ENCODE measurements at regions of chr1 and their contacts with region 1.

Region 1: GRCh38 chr1:111507411-111508201 is 4.2 kb upstream of the ADORA3 start:
- DNase-seq: peak; percentile 79
- ATAC-seq: peak; percentile 88
- H3K4me3 Mint-ChIP-seq: peak overlapping the region; percentile 63
- H3K27ac Mint-ChIP-seq: peak overlapping the region; percentile 50; the same call in 1 of the 2 replicates
- H3K4me1 Mint-ChIP-seq: peaks cover 7% of the 10 kb centered on the region
- H3K27me3 Mint-ChIP-seq: no peaks in the 10 kb centered on the region
- CTCF ChIP-seq: no peak

Region 2: GRCh38 chr1:111481387-111482221 is 26.0 kb before region 1 on chr1:
- CTCF ChIA-PET with region 1: interaction called, 71 read pairs
- POLR2A ChIA-PET with region 1: interaction called, 5 read pairs
- DNase-seq: peak; percentile 74
- ATAC-seq: peak; percentile 98
- H3K4me3 Mint-ChIP-seq: no peak overlapping the region
- H3K27ac Mint-ChIP-seq: no peak overlapping the region
- H3K4me1 Mint-ChIP-seq: no peaks in the 10 kb centered on the region
- H3K27me3 Mint-ChIP-seq: no peaks in the 10 kb centered on the region
- CTCF ChIP-seq: peak; percentile 42

Region 3: DNA sequence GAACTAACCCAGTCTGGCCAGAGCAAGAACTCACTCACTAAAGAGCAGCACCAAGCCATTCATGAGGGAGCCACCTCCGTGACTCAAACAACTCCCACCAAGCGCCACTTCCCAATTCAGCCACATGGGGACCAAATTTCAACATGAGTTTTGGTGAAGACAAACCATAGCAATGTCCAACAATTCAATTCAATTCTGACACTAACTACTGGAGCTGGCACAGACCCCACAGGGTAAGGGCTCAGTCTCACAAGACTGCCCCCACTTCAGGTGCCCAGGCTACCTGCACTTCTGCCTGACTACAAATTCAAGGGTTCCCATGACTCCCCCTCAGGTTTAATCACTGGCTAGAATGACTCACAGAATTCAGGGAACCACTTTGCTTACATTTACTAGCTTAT is 63.2 kb after region 1 on chr1:
- CTCF ChIA-PET with region 1: interaction called, 11 read pairs
- POLR2A ChIA-PET with region 1: no interaction called
- DNase-seq: peak; percentile 34
- ATAC-seq: peak; percentile 83
- H3K4me3 Mint-ChIP-seq: no peak overlapping the region
- H3K27ac Mint-ChIP-seq: no peak overlapping the region
- H3K4me1 Mint-ChIP-seq: peaks cover 15% of the 10 kb centered on the region
- H3K27me3 Mint-ChIP-seq: no peaks in the 10 kb centered on the region
- CTCF ChIP-seq: 0 out of 2 replicates have a peak, but pooled peaks have one; percentile 24

Region 4: DNA sequence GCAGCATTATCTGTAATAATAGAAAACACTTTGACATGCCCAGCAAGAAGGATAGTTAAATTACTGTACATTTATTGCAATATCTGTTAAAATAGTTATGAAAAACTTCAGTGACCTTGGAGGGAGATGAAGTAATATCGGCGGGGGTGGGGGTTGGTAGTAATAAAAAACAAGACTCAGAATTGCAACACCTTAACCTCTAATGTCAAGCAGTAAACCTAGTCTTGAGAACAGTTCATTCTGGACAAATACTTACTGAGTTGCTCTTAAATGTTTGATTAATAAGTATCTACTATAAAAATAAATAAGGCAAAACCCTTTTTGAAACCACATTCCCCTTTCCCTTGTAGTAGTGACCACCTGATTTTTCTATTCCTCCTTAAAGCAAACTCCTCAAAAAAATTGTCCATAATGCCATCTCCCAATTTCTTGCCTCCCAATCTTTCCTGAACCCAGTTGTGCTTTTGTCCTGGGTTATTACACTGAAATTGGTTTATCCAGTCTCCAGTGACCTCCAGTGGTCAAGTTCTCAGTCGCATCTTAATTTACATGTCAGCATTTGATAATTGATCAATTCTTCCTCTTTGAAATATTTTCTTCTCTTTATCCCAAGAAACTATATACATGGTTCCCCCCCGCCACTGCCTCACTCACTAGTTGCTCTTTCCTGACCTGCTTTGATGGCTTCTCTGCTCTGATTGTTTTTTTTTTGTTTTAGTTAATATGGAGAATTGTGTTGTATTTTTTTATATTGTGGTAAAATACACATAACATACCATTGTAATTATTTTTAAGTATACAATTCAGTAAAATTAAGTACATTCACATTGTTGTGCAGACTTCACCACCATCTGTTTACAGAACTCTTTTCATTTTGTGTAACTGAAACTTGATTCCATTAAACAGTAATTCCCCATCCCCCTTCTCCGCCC is 148.7 kb after region 1 on chr1:
- CTCF ChIA-PET with region 1: interaction called, 11 read pairs
- POLR2A ChIA-PET with region 1: no interaction called
- DNase-seq: no peak
- ATAC-seq: no peak
- H3K4me3 Mint-ChIP-seq: no peak overlapping the region
- H3K27ac Mint-ChIP-seq: peak overlapping the region; percentile 62; the same call in 1 of the 2 replicates
- H3K4me1 Mint-ChIP-seq: peaks cover 18% of the 10 kb centered on the region
- H3K27me3 Mint-ChIP-seq: no peaks in the 10 kb centered on the region
- CTCF ChIP-seq: no peak

Region 5: GRCh38 chr1:111709986-111710385 is 202.4 kb after region 1 on chr1:
- CTCF ChIA-PET with region 1: interaction called, 43 read pairs
- POLR2A ChIA-PET with region 1: no interaction called
- DNase-seq: no peak
- ATAC-seq: no peak
- H3K4me3 Mint-ChIP-seq: no peak overlapping the region
- H3K27ac Mint-ChIP-seq: no peak overlapping the region
- H3K4me1 Mint-ChIP-seq: no peaks in the 10 kb centered on the region
- H3K27me3 Mint-ChIP-seq: no peaks in the 10 kb centered on the region
- CTCF ChIP-seq: no peak

Region 6: DNA sequence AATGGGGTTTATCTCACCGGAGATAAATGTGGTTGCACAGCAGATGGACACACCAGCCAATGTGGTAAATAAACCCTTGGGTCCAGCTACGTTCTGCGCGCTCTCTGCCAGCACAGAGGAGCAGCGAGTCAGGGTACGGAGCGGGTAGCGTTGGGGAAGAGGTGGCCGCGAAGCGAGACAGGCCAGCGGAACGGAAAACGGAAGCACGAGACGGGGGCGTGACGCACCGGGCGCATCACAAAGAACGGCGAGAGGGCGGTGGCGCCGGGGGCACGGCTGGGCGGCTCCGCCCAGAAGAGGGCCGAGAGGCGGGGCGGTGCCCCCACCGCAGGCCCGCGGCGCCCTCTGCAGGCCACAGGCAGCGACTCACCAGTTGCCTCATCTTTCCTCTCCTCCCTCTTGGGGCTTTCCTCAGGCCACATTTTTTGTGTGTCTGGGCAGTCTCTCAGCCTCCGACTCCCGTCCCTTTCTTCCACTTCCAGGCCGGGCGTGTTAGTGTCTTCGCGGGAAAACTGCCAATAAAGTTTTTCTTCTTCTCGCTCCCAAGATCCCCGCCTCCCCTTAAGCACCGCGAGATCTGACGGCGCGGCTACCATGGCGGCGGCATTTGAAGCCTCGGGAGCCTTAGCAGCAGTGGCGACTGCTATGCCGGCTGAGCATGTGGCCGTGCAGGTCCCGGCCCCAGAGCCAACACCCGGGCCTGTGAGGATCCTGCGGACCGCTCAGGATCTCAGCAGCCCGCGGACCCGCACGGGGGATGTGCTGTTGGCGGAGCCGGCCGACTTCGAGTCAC is 247.9 kb after region 1 on chr1 and contains the start of gene DDX20:
- CTCF ChIA-PET with region 1: interaction called, 12 read pairs
- POLR2A ChIA-PET with region 1: interaction called, 7 read pairs
- DNase-seq: peak; percentile 90
- ATAC-seq: peak; percentile 86
- H3K4me3 Mint-ChIP-seq: peak within 1 kb of the TSS; percentile 97
- H3K27ac Mint-ChIP-seq: peak within 1 kb of the TSS; percentile 99
- H3K4me1 Mint-ChIP-seq: peaks cover 19% of the 10 kb centered on the region
- H3K27me3 Mint-ChIP-seq: peaks cover 7% of the 10 kb centered on the region
- CTCF ChIP-seq: peak; percentile 69; the same call in 1 of the 2 replicates
- total RNA-seq, gene DDX20: 15.0 to 19.3 TPM (median 17.9 TPM) in 3 replicates

Region 7: DNA sequence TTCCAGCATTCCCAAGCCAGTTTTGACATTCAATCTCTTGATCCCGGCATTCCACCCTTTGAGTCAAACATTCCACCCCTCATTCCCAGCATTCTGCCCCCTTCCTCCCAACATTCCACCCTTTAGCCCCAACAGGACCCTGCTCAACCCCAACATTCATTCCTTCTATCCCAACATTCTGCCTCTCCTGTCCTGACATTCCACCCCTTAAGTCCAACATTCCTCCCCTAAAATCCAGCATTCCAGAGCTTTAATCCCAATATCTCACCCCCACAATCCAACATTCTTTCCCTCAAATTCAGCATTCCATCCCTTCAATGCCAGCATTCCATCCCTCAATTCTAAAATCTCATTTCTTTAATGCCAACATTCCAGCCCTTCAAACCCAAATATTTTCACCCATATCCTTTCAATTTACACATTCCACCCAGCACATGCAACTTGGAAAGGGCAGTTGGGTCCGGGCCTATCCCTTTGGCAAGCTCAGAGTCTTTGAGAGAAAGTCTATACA is 271.0 kb after region 1 on chr1:
- CTCF ChIA-PET with region 1: no interaction called
- POLR2A ChIA-PET with region 1: no interaction called
- DNase-seq: peak; percentile 33
- ATAC-seq: peak; percentile 85
- H3K4me3 Mint-ChIP-seq: no peak overlapping the region
- H3K27ac Mint-ChIP-seq: peak overlapping the region; percentile 6; the same call in 1 of the 2 replicates
- H3K4me1 Mint-ChIP-seq: peaks cover 22% of the 10 kb centered on the region
- H3K27me3 Mint-ChIP-seq: no peaks in the 10 kb centered on the region; the same call in 1 of the 2 replicates
- CTCF ChIP-seq: no peak

Measured in WTC11 (cell line).